IMR-90 (cell line): ENCODE measurements at regions of chr2 and their contacts with region 1.

Region 1: DNA sequence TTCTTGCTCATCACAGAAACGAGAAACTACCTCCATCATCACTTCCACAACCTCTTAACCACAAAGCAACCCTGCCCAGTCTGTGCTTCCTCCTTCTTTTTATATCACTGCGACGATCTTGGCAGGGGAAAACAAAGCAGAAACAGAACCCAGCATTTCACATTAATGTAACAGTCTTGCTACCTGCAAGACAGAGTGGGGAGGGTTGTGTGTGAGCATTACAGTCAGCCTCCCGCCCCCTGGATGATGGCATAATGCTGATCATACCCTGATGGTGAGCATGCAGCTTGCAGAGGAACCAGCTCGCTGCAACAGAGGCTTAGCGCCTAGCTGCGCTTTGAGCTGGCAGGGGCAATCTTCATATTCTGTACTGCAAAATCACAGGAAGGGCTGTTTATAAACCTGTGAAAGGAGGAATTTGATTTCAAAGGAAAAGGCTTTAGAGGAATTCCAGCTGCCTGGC is 376.1 kb downstream of the IRS1 start:
- DNase-seq: peak; percentile 51
- ATAC-seq: no peak
- H3K4me3 ChIP-seq: no peak overlapping the region
- H3K27ac ChIP-seq: peak overlapping the region; percentile 80
- H3K4me1 ChIP-seq: peaks cover 24% of the 10 kb centered on the region
- H3K27me3 ChIP-seq: no peaks in the 10 kb centered on the region
- CTCF ChIP-seq: no peak
- POLR2A ChIP-seq: no peak
- RAD21 ChIP-seq: no peak

Region 2: DNA sequence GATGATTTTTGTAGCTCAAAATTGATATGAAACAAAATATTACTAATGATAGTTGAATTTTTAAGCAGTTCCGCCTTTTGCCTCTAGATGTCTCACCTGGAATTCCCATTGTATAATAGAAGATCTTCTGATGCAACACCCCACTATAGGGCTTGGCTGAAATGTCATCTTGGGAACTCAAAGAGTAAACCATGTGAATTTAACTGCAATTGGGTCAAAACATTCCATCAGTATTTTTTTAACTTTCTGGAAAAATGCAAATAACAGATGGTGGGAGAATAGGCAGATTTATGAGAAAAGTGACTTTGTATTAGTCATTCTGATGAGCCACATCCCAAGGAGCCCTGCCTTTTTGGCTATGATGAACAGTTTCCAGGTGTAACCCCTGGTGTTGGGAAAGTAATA is 534.1 kb before region 1 on chr2:
- CTCF ChIA-PET with region 1: interaction called, 3 read pairs
- POLR2A ChIA-PET with region 1: no interaction called
- dilution Hi-C with region 1: no loop called
- in situ Hi-C with region 1: no loop called
- intact Hi-C with region 1: loop called (anchors 1 kb)
- DNase-seq: peak; percentile 94
- ATAC-seq: peak; percentile 81
- H3K4me3 ChIP-seq: no peak overlapping the region
- H3K27ac ChIP-seq: peak overlapping the region; percentile 40; the same call in 1 of the 2 replicates
- H3K4me1 ChIP-seq: peaks cover 6% of the 10 kb centered on the region
- H3K27me3 ChIP-seq: no peaks in the 10 kb centered on the region
- CTCF ChIP-seq: peak; percentile 85
- POLR2A ChIP-seq: no peak
- RAD21 ChIP-seq: peak; percentile 82

Region 3: DNA sequence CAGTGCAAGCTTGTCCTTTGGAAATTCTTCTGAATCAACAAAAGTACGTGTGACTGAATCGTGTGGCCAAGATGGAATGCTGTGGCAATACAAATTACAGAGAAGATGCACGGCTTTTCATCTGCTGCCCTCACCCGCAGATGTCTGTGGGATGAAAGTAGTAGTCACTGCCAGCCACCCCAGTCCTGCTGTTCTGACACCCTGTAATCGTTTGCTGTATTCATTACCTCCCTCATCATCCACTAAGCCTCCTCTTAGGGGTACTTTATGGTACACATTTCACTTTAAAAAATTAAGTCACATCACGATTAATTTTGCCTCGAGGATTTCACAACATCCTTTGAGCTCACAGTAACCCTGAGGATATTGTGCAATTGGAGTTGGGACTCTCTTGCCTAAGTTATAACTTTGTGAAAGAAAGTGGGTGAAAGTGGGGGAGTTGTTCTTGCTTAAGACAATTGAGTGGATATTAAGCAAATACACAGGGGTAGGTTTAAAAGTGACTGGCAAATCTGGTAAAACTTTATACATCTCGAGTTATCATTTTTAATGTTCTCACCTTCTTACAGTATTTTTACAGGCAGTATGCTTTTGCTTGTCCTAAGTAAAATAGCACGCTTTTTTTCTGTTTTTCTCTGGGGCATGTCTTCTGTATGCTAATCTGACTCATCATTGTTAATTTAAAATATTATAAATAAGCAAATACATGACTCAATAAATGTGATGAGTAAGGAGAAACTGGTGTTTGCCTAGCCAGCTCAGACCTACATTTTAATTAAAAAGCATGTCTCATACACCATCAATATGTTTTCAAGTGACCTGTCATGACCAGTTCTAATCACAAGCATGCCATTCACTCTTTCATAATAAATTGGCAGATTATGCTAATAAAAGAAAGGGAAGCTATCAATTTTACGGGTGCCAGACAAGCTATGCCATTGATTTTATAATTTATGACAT is 304.8 kb before region 1 on chr2:
- CTCF ChIA-PET with region 1: interaction called, 3 read pairs
- POLR2A ChIA-PET with region 1: no interaction called
- dilution Hi-C with region 1: no loop called
- in situ Hi-C with region 1: no loop called
- intact Hi-C with region 1: loop called (anchors 2 kb)
- DNase-seq: peak; percentile 91
- ATAC-seq: peak; percentile 42
- H3K4me3 ChIP-seq: peak overlapping the region; percentile 6; the same call in 1 of the 2 replicates
- H3K27ac ChIP-seq: peak overlapping the region; percentile 92
- H3K4me1 ChIP-seq: peaks cover 8% of the 10 kb centered on the region
- H3K27me3 ChIP-seq: no peaks in the 10 kb centered on the region
- CTCF ChIP-seq: no peak
- POLR2A ChIP-seq: no peak
- RAD21 ChIP-seq: no peak; the same call in 1 of the 2 replicates

Region 4: GRCh38 chr2:226478109-226478809 is 54.7 kb after region 1 on chr2:
- CTCF ChIA-PET with region 1: no interaction called
- POLR2A ChIA-PET with region 1: interaction called, 4 read pairs
- dilution Hi-C with region 1: no loop called
- in situ Hi-C with region 1: no loop called
- intact Hi-C with region 1: loop called (anchors 2 kb)
- DNase-seq: peak; percentile 96
- ATAC-seq: peak; percentile 87
- H3K4me3 ChIP-seq: no peak overlapping the region
- H3K27ac ChIP-seq: peak overlapping the region; percentile 96
- H3K4me1 ChIP-seq: peaks cover 29% of the 10 kb centered on the region
- H3K27me3 ChIP-seq: no peaks in the 10 kb centered on the region
- CTCF ChIP-seq: no peak
- POLR2A ChIP-seq: no peak
- RAD21 ChIP-seq: peak; percentile 7

Region 5: GRCh38 chr2:226489775-226490541 is 66.4 kb after region 1 on chr2:
- CTCF ChIA-PET with region 1: no interaction called
- POLR2A ChIA-PET with region 1: no interaction called
- dilution Hi-C with region 1: no loop called
- in situ Hi-C with region 1: no loop called
- intact Hi-C with region 1: no loop called
- DNase-seq: peak; percentile 94
- ATAC-seq: peak; percentile 92
- H3K4me3 ChIP-seq: no peak overlapping the region
- H3K27ac ChIP-seq: peak overlapping the region; percentile 33
- H3K4me1 ChIP-seq: no peaks in the 10 kb centered on the region; the same call in 1 of the 2 replicates
- H3K27me3 ChIP-seq: no peaks in the 10 kb centered on the region
- CTCF ChIP-seq: no peak
- POLR2A ChIP-seq: no peak
- RAD21 ChIP-seq: peak; percentile 23; the same call in 1 of the 2 replicates

Region 6: GRCh38 chr2:226649871-226650660 is 226.5 kb after region 1 on chr2:
- CTCF ChIA-PET with region 1: no interaction called
- POLR2A ChIA-PET with region 1: no interaction called
- dilution Hi-C with region 1: no loop called
- in situ Hi-C with region 1: no loop called
- intact Hi-C with region 1: loop called (anchors 5 kb)
- DNase-seq: peak; percentile 98
- ATAC-seq: peak; percentile 91
- H3K4me3 ChIP-seq: no peak overlapping the region
- H3K27ac ChIP-seq: peak overlapping the region; percentile 66
- H3K4me1 ChIP-seq: peaks cover 23% of the 10 kb centered on the region
- H3K27me3 ChIP-seq: no peaks in the 10 kb centered on the region
- CTCF ChIP-seq: no peak
- POLR2A ChIP-seq: peak; percentile 42; the same call in 1 of the 2 replicates
- RAD21 ChIP-seq: peak; percentile 16

Region 7: GRCh38 chr2:227106845-227107759 is 683.6 kb after region 1 on chr2:
- CTCF ChIA-PET with region 1: no interaction called
- POLR2A ChIA-PET with region 1: no interaction called
- dilution Hi-C with region 1: no loop called
- in situ Hi-C with region 1: no loop called
- intact Hi-C with region 1: loop called (anchors 10 kb)
- DNase-seq: peak; percentile 71
- ATAC-seq: peak; percentile 98
- H3K4me3 ChIP-seq: no peak overlapping the region
- H3K27ac ChIP-seq: no peak overlapping the region
- H3K4me1 ChIP-seq: no peaks in the 10 kb centered on the region
- H3K27me3 ChIP-seq: peaks cover 2% of the 10 kb centered on the region; the same call in 1 of the 2 replicates
- CTCF ChIP-seq: peak; percentile 93
- POLR2A ChIP-seq: no peak
- RAD21 ChIP-seq: peak; percentile 90